CD8-positive, alpha-beta T cell (primary cell): ENCODE measurements at regions of chr2 and their contacts with region 1.

Region 1: DNA sequence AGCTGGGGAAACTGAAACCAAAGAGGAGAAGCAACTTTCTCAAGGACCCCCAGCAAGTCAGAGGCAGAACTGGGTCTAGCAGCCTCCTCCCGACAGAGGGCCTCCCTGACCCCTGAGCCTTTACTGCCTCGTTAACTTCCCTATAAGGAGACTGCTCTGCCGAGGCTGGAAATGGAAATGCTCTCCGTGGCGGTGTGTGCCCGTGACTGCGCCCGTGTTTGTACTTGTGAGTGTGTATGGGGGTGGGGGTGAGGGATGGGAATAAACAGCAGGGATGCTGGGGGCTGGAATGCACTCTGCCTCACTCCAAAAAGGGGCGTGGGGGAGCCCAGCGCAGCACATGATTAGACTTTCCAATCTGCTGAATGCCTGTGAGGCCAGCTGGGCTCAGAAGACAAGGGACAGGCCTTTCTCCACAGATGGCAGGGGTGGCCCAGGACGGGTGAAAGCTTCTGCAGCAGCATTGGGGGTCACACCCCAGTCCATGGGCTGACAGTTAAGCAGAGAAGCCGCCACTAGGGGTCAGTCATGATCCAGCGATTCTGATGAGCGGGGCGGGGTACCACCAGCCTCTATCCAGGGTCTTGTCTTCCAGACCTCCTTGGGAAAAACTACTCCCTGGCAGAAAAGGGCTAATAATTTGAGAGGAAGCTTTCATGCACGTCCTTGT is 26.8 kb downstream of the MPHOSPH10 start:
- DNase-seq: peak; percentile 38 to 73 (median 59)
- ATAC-seq: peak; percentile 70
- H3K4me3 ChIP-seq: no peak overlapping the region
- H3K4me3 Mint-ChIP-seq: no peak overlapping the region
- H3K27ac ChIP-seq: no peak overlapping the region
- H3K27ac Mint-ChIP-seq: no peak overlapping the region
- H3K4me1 ChIP-seq: no peaks in the 10 kb centered on the region
- H3K4me1 Mint-ChIP-seq: peaks cover 8% of the 10 kb centered on the region
- H3K27me3 ChIP-seq: peaks cover 0 to 2% of the 10 kb centered on the region in 2 experiments
- H3K27me3 Mint-ChIP-seq: peaks cover 10% of the 10 kb centered on the region
- CTCF ChIP-seq: peak; percentile 58

Region 2: DNA sequence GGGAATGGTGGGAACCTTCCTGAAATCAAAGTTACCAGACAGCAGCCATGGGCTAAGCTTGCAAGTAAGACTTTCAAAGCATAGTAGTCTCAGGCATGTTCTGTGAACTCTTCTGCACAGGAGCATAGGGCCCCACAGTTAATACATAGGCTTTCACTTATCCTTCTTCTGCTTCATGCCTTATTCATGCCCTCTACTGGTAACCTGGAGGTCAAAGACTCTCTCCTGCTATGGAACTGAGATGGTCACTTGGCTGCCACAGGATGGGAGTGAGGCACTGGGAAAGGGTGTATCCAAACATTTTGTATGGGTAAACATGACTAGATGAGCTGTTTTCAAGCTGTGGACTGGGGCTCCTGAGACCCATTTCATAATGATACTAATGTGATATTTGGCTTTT is 125.2 kb after region 1 on chr2:
- CTCF ChIA-PET with region 1: interaction called, 8 read pairs
- POLR2A ChIA-PET with region 1: no interaction called
- intact Hi-C with region 1: loop called in 1 of 2 experiments (anchors 5 kb)
- DNase-seq: peak in 1 of 9 experiments; percentile 11
- ATAC-seq: no peak
- H3K4me3 ChIP-seq: no peak overlapping the region
- H3K4me3 Mint-ChIP-seq: no peak overlapping the region
- H3K27ac ChIP-seq: no peak overlapping the region
- H3K27ac Mint-ChIP-seq: no peak overlapping the region
- H3K4me1 ChIP-seq: peaks cover 3% of the 10 kb centered on the region
- H3K4me1 Mint-ChIP-seq: peaks cover 4% of the 10 kb centered on the region
- H3K27me3 ChIP-seq: peaks cover 5 to 17% of the 10 kb centered on the region in 2 experiments
- H3K27me3 Mint-ChIP-seq: peaks cover 47% of the 10 kb centered on the region
- CTCF ChIP-seq: no peak